Activated CD8-positive, alpha-beta T cell treated with anti-CD3 and anti-CD28 coated beads, Interleukin-2, amount 10 ng/mL, durations not matched to agents 7 days and 5 days (primary cell): ENCODE measurements at regions of chr10 and their contacts with region 1.

Region 1: GRCh38 chr10:27155066-27155754 is at the start of gene MASTL:
- DNase-seq: peak; percentile 95
- ATAC-seq: peak; percentile 80
- H3K4me3 Mint-ChIP-seq: peak within 1 kb of the TSS; percentile 99
- H3K27ac Mint-ChIP-seq: peak within 1 kb of the TSS; percentile 100
- H3K4me1 Mint-ChIP-seq: peaks cover 43% of the 10 kb centered on the region
- H3K27me3 Mint-ChIP-seq: no peaks in the 10 kb centered on the region
- total RNA-seq, gene MASTL: 40.1 to 40.7 TPM

Region 2: GRCh38 chr10:27052646-27053045 is 102.6 kb before region 1 on chr10:
- CTCF ChIA-PET with region 1: no interaction called
- POLR2A ChIA-PET with region 1: no interaction called
- DNase-seq: no peak
- ATAC-seq: no peak
- H3K4me3 Mint-ChIP-seq: no peak overlapping the region
- H3K27ac Mint-ChIP-seq: no peak overlapping the region
- H3K4me1 Mint-ChIP-seq: no peaks in the 10 kb centered on the region
- H3K27me3 Mint-ChIP-seq: no peaks in the 10 kb centered on the region

Region 3: GRCh38 chr10:27099916-27100812 is 55.0 kb before region 1 on chr10 and contains the start of gene ANKRD26:
- CTCF ChIA-PET with region 1: interaction called, 5 read pairs
- POLR2A ChIA-PET with region 1: interaction called, 66 read pairs
- DNase-seq: peak; percentile 97
- ATAC-seq: peak; percentile 68
- H3K4me3 Mint-ChIP-seq: peak within 1 kb of the TSS; percentile 88
- H3K27ac Mint-ChIP-seq: peak within 1 kb of the TSS; percentile 95
- H3K4me1 Mint-ChIP-seq: peaks cover 44% of the 10 kb centered on the region
- H3K27me3 Mint-ChIP-seq: peaks cover 2% of the 10 kb centered on the region
- total RNA-seq, gene ANKRD26: 9.0 to 12.8 TPM

Region 4: GRCh38 chr10:27494116-27494805 is 339.1 kb after region 1 on chr10:
- CTCF ChIA-PET with region 1: no interaction called
- POLR2A ChIA-PET with region 1: no interaction called
- DNase-seq: no peak
- ATAC-seq: no peak
- H3K4me3 Mint-ChIP-seq: no peak overlapping the region
- H3K27ac Mint-ChIP-seq: no peak overlapping the region
- H3K4me1 Mint-ChIP-seq: no peaks in the 10 kb centered on the region
- H3K27me3 Mint-ChIP-seq: peaks cover 7% of the 10 kb centered on the region